Colonic mucosa (tissue), 4 donors: ENCODE measurements at regions of chr14 and their contacts with region 1.

Region 1: GRCh38 chr14:25246751-25247150 is 196.8 kb upstream of the STXBP6 start:
- DNase-seq: no peak
- H3K4me3 ChIP-seq: no peak overlapping the region
- H3K27ac ChIP-seq: no peak overlapping the region
- H3K4me1 ChIP-seq: no peaks in the 10 kb centered on the region
- H3K27me3 ChIP-seq: no peaks in the 10 kb centered on the region
- CTCF ChIP-seq: no peak

Region 2: GRCh38 chr14:24710403-24711112 is 536.2 kb before region 1 on chr14:
- intact Hi-C with region 1: loop called (anchors 10 kb)
- DNase-seq: peak; percentile 59
- H3K4me3 ChIP-seq: no peak overlapping the region
- H3K27ac ChIP-seq: no peak overlapping the region
- H3K4me1 ChIP-seq: no peaks in the 10 kb centered on the region
- H3K27me3 ChIP-seq: no peaks in the 10 kb centered on the region
- CTCF ChIP-seq: peak; percentile 88